Dendritic cell treated with granulocyte-macrophage colony-stimulating factor and Interleukin-4, amounts not matched to agents 40 ng/mL and 50 ng/mL, for 4 days (primary cell): ENCODE measurements at regions of chr17 and their contacts with region 1.

Region 1: GRCh38 chr17:19377602-19378392 is 501 bp upstream of the MAPK7 start:
- H3K4me3 Mint-ChIP-seq: peak overlapping the region; percentile 100
- H3K27ac Mint-ChIP-seq: peak overlapping the region; percentile 98
- H3K4me1 Mint-ChIP-seq: peaks cover 43% of the 10 kb centered on the region
- H3K27me3 Mint-ChIP-seq: no peaks in the 10 kb centered on the region

Region 2: DNA sequence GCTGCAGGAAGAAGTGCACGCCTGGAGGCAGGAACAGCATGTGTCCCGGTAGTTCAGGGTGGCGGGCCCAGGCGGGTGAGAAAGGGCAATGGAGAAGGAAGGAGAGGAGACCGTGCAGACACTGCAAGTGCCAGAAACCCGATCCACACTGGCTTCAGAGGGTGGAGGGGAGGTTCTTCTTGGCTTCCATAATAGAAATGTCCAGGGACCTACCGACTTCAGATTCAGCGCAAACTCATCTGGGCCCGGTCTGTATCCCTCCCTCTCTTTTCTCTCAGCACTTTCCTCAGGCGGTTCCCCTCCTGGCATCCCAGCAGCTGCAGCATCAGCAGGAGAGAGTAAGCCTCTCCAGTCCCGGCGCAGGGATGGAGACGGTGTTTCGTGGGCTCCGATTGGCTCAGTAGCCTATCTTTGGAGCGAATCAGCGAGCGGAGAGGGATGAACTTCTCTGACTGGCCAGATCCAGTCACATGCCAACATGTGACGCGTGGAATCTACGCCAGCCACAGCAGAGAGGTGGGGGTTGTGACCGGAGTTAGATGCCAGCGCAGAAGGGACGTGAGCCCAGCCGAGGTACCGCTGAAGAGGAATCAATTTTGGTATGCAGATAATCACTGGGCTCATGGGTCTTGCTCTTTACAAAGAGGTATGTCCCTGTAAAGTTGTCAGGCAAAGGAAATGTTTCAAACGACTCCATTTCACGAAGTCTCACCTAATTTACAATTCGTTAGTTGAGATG is 521.8 kb before region 1 on chr17:
- intact Hi-C with region 1: no loop called
- H3K4me3 Mint-ChIP-seq: peak overlapping the region; percentile 85
- H3K27ac Mint-ChIP-seq: peak overlapping the region; percentile 85
- H3K4me1 Mint-ChIP-seq: peaks cover 41% of the 10 kb centered on the region
- H3K27me3 Mint-ChIP-seq: no peaks in the 10 kb centered on the region

Region 3: DNA sequence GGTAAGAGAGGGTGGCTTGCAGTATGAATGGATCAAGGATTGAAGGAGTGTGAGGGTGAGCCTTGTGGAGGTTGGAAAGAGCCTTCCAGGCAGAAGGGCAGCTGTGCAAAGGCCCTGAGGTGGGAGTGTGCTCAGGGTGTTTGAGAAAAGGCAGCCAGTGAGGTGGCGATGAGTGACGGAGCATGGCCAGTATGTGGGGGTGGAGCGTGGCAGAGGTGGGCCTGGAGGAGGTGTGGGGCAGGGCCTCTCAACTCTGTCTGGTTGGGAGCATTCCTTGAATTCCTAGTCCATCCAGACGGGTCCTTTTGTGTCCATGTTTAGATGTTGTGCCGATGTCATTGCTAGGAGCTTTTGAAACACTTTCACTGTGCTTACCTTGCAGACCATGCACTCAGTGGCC is 89.3 kb before region 1 on chr17:
- intact Hi-C with region 1: no loop called
- H3K4me3 Mint-ChIP-seq: no peak overlapping the region
- H3K27ac Mint-ChIP-seq: peak overlapping the region; percentile 84
- H3K4me1 Mint-ChIP-seq: peaks cover 92% of the 10 kb centered on the region
- H3K27me3 Mint-ChIP-seq: peaks cover 67% of the 10 kb centered on the region

Region 4: GRCh38 chr17:19440421-19440820 is 62.6 kb after region 1 on chr17:
- intact Hi-C with region 1: no loop called
- H3K4me3 Mint-ChIP-seq: no peak overlapping the region
- H3K27ac Mint-ChIP-seq: no peak overlapping the region
- H3K4me1 Mint-ChIP-seq: peaks cover 11% of the 10 kb centered on the region
- H3K27me3 Mint-ChIP-seq: peaks cover 29% of the 10 kb centered on the region

Region 5: DNA sequence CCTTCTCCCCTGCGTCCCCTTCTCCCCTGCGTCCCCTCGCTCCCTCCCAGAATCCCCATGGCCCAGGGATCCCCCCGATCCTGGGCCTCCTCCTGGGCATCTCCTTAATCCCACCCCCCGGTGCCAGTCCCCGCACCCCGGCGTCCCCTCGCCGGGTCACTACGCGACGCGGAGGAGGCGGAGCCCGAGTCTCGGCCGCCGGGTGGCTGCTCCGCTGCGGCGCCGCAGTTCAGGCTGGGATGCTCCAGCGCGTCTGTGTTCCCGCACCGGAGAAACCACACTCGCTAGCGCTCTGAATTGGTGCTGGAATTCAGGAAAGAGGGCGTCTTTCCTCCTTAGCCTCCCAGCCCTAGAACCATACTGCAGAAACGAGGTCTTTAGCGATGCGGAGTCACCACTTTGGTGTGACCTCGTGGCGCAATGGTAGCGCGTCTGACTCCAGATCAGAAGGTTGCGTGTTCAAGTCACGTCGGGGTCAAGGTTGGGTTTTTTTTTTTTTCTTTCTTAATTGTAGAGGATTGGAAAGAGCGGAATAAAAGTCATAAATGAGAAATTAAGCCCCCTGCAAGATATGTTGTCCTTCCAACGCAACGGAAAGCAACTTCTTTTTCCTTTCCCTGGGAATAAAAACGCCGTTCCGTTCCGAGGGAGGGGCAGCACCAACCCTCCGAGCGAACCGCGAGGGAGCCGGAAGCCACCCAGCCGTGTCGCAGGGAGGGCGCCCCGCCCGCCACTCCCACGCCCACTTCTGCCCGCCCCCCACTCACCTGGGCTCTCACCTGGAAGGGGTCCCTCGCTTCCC is 130.2 kb after region 1 on chr17:
- intact Hi-C with region 1: loop called (anchors 5 kb)
- H3K4me3 Mint-ChIP-seq: peak overlapping the region; percentile 89
- H3K27ac Mint-ChIP-seq: peak overlapping the region; percentile 76
- H3K4me1 Mint-ChIP-seq: peaks cover 9% of the 10 kb centered on the region
- H3K27me3 Mint-ChIP-seq: peaks cover 20% of the 10 kb centered on the region